Breast epithelium (tissue), 4 donors: ENCODE measurements at regions of chr18 and their contacts with region 1.

Region 1: DNA sequence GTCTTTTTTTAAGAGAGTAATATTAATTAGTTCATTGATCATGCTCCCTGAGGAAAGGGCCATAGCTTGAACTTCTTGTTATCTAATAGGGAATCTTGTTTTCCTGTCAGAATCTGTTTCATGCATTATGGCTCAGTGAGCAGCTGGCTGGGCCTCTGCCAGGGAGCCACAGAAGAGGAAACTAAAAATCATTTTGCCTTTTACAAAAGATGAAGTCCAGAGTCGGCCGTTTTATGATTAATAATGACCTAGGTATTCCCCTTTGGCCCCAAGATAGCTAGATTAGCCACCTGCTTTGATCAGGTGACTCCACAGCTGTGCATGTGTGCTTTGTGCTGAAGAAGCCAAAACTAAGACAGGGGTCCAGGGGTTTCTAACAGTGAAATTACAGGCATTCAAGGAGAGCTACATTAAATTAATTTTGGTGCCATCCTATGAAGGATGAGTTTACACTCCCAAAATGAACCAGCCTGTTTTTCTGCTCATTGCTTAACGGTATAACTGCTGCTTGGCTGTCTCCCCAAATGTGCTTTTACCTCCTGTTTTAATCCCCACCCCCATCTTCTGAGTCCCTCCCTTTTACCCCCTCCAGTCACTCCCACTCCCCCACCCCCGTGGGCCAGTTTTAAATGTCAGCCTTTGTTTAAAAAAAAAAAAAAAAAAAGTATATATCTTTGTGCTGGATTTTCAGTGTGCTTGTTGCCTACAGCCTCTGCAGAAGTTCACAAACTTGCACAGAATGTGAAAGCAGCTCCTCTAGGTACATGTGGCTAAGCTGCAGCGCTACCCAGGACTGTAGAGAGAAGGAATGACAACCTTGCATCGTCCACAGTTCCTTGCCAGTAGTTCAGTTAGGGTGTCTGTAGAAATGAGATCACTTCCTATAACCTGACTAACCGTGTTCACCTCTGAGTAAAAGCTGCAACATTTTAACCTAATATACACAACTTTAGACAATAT is 93.1 kb downstream of the CABLES1 start:
- DNase-seq: no peak
- H3K4me3 ChIP-seq: no peak overlapping the region
- H3K27ac ChIP-seq: peak overlapping the region; percentile 87 to 88
- H3K4me1 ChIP-seq: peaks cover 3 to 5% of the 10 kb centered on the region in 2 donors
- H3K27me3 ChIP-seq: no peaks in the 10 kb centered on the region
- CTCF ChIP-seq: no peak
- POLR2A ChIP-seq: no peak

Region 2: DNA sequence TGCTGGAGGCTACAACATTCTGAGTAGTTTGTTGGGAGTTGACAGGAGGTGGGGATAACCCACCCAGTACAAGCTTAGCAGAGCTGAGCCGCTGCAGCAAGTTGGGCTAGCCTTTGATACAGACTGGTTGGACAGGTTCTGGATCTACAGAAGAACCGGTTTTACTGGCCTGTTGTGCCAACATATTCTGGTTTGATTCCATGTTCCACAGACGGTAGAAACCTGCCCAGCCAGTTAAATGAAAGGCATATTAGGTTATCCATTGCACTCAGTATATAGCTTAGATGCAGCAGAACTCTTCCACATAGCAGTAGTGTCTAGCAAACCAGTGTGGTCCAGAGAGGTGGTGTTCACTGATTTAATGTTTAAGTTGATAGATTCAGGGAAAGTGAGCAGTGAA is 314.5 kb before region 1 on chr18:
- intact Hi-C with region 1: no loop called
- DNase-seq: peak; percentile 69 to 91
- H3K4me3 ChIP-seq: peak overlapping the region in 2 of 3 donors; percentile 27 to 35
- H3K27ac ChIP-seq: peak overlapping the region; percentile 54 to 65
- H3K4me1 ChIP-seq: peaks cover 0 to 9% of the 10 kb centered on the region in 2 donors
- H3K27me3 ChIP-seq: no peaks in the 10 kb centered on the region
- CTCF ChIP-seq: no peak
- POLR2A ChIP-seq: no peak

Region 3: DNA sequence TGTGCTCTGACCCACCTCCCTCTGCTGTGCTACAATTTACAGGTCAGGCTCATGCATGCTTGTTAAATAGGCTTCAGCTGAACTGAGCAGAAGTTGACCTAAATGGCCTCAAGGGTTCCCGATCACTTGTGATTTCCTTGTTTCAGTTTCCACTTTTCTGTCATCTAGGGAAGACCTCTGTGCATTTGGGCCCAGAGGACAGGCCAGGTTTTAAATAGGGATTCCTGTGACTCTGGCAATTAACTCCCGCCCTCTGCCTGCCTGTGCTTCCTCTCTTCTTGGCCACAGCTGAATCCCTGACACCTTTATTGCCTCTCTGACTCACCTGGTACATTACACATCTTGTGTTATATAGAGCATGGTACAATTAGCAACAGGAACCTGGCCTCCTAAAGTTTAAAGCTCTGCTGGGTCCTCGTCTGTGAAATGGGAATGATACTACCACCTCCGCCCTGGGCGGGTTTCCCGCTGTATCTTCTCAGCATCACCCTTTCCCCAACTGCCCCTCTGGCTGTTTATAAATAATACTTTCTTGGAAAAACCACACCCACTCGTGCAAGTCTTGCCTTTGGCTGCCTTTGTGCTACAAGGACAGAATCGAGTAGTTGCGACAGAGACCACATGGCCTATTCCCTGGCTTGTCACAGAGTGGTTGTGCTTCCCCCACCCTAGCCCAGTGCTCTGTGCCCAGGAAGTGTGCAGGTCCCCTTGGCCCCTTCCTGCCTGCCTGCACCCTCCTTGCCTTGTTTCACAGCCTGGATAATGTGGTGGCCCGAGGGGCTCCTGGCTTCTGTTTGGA is 85.2 kb before region 1 on chr18:
- intact Hi-C with region 1: loop called (anchors 10 kb)
- DNase-seq: peak in 1 of 2 donors; percentile 70
- H3K4me3 ChIP-seq: peak overlapping the region in 1 of 3 donors; percentile 33
- H3K27ac ChIP-seq: peak overlapping the region; percentile 93 to 94
- H3K4me1 ChIP-seq: peaks cover 15 to 16% of the 10 kb centered on the region in 2 donors
- H3K27me3 ChIP-seq: no peaks in the 10 kb centered on the region
- CTCF ChIP-seq: no peak
- POLR2A ChIP-seq: no peak

Region 4: GRCh38 chr18:25136416-25137196 is 1908.2 kb after region 1 on chr18:
- intact Hi-C with region 1: no loop called
- DNase-seq: no peak
- H3K4me3 ChIP-seq: no peak overlapping the region
- H3K27ac ChIP-seq: peak overlapping the region; percentile 40 to 62
- H3K4me1 ChIP-seq: no peaks in the 10 kb centered on the region
- H3K27me3 ChIP-seq: no peaks in the 10 kb centered on the region
- CTCF ChIP-seq: no peak
- POLR2A ChIP-seq: no peak